ENCODE measurements at regions of chr7 and their contacts with region 1.

Region 1: GRCh38 chr7:78020136-78020873 is 221.7 kb downstream of the PHTF2 start:
- DNase-seq: peak; percentile 72
- H3K4me3 ChIP-seq: peak overlapping the region; percentile 64
- H3K27ac ChIP-seq: peak overlapping the region; percentile 77
- H3K27me3 ChIP-seq: no peaks in the 10 kb centered on the region
- CTCF ChIP-seq: peak; percentile 72

Region 2: GRCh38 chr7:78033410-78033809 is 13.1 kb after region 1 on chr7:
- CTCF ChIA-PET with region 1: interaction called, 10 read pairs
- POLR2A ChIA-PET with region 1: no interaction called
- DNase-seq: no peak
- H3K4me3 ChIP-seq: no peak overlapping the region
- H3K27ac ChIP-seq: no peak overlapping the region
- H3K27me3 ChIP-seq: no peaks in the 10 kb centered on the region
- CTCF ChIP-seq: no peak

Region 3: GRCh38 chr7:78226059-78226719 is 205.9 kb after region 1 on chr7:
- CTCF ChIA-PET with region 1: interaction called, 14 read pairs
- POLR2A ChIA-PET with region 1: no interaction called
- DNase-seq: no peak
- H3K4me3 ChIP-seq: no peak overlapping the region
- H3K27ac ChIP-seq: no peak overlapping the region
- H3K27me3 ChIP-seq: no peaks in the 10 kb centered on the region
- CTCF ChIP-seq: peak; percentile 66

Region 4: DNA sequence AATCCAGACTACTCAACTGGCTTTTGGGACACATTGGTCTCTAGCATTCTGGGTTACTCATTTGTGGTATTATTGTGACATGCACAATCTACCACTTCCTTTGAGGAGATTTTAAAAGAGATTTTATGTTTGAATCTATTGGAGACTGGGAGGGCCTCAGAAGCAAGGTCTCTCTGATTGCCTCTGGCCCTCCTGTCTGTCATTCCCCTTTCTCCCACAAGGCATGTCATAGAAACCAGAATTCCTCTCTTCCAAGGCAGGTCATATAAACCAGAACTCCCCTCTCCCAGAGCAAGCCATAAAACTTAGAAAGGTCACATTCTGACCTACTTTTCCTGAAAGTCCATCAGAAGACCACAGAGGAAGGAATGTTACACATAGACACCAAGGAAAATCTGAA is 555.9 kb after region 1 on chr7:
- CTCF ChIA-PET with region 1: no interaction called
- POLR2A ChIA-PET with region 1: no interaction called
- DNase-seq: no peak
- H3K4me3 ChIP-seq: no peak overlapping the region
- H3K27ac ChIP-seq: no peak overlapping the region
- H3K27me3 ChIP-seq: no peaks in the 10 kb centered on the region
- CTCF ChIP-seq: no peak

Measured in AG04450 (cell line).